Activated B cell treated with CpG ODN at 0.5 μM for 24 hours (primary cell): ENCODE measurements at regions of chr14 and their contacts with region 1.

Region 1: GRCh38 chr14:24195191-24196070 is at the start of gene TM9SF1:
- DNase-seq: peak; percentile 91
- ATAC-seq: peak; percentile 83
- H3K4me3 Mint-ChIP-seq: peak within 1 kb of the TSS; percentile 96
- H3K27ac Mint-ChIP-seq: peak within 1 kb of the TSS; percentile 97
- H3K4me1 Mint-ChIP-seq: peaks cover 48% of the 10 kb centered on the region
- H3K27me3 Mint-ChIP-seq: no peaks in the 10 kb centered on the region
- CTCF ChIP-seq: no peak
- total RNA-seq, gene TM9SF1: 24.5 and 26.3 TPM in 2 replicates

Region 2: DNA sequence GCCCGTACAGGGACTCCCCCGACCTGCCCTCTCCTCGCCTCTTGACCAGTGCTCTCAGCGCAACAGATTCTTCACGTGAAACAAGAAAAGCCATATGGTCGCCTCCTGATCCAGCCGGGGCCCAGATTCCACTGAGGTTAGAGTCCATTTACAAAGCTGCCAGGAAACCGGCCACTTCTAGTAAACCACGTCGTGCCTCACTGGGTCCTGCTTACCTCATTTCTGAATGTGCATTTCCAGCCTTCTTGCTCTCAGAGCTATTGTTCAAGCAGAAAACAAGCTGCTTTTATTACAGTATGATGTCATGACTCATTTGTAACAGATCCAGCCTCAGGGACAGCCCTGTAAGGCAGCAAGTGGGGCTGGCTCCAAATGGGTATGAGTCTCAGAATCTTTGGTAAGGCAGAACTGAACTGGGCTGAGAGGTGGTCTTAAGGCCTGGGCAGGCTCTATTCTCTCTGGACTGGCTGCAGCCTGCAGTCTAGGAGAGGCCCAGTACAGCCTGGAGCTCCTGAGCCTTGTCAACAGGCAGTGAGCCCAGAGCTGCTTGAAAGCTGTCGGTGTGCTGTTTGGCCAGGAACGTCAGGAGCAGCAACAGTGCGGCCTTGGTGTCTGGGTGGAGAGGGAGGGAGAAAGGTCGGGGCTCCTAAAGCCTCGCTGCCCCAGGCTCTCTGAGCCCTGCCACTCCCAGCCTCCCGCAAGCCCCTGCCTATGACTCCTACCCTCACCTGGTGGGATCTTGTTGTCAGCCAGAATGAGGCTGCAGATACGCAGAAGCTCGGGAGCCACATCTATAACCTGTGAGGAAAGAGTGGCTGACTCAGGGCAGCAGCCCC is 15.3 kb before region 1 on chr14:
- CTCF ChIA-PET with region 1: no interaction called
- POLR2A ChIA-PET with region 1: interaction called, 16 read pairs
- intact Hi-C with region 1: no loop called
- DNase-seq: no peak
- ATAC-seq: no peak
- H3K4me3 Mint-ChIP-seq: no peak overlapping the region
- H3K27ac Mint-ChIP-seq: peak overlapping the region; percentile 71
- H3K4me1 Mint-ChIP-seq: peaks cover 7% of the 10 kb centered on the region
- H3K27me3 Mint-ChIP-seq: no peaks in the 10 kb centered on the region
- CTCF ChIP-seq: no peak

Region 3: DNA sequence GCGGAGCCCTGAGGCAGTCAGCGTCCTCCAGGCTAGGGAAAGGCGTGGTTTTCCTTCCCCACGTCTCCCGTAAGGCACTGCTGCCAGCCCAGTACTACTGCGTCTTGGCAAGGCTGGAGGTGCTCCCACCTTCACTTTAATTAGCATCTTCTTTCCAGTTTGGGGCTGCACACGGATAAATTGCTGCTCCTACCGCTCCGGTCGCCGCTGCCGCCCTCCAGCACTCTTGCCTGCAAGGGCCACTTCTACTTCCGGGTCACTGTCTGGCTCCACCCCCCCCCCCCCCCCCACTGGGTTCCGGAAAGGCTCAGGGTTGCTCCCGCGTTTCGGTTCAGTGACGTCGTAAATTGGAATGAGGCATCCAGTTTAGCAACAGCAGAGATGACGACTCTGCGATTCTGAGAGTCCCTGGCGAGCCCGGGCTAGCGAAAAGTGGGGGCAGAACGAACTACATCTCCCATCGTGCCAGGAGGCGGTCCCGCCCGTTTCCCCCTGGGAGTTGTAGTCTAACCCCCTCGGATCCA is 36.8 kb after region 1 on chr14 and contains the start of gene NEDD8:
- CTCF ChIA-PET with region 1: no interaction called
- POLR2A ChIA-PET with region 1: interaction called, 8 read pairs
- intact Hi-C with region 1: loop called (anchors 1 kb)
- DNase-seq: no peak
- ATAC-seq: peak; percentile 88
- H3K4me3 Mint-ChIP-seq: peak within 1 kb of the TSS; percentile 99
- H3K27ac Mint-ChIP-seq: peak within 1 kb of the TSS; percentile 94
- H3K4me1 Mint-ChIP-seq: peaks cover 43% of the 10 kb centered on the region
- H3K27me3 Mint-ChIP-seq: no peaks in the 10 kb centered on the region
- CTCF ChIP-seq: no peak
- total RNA-seq, gene NEDD8: 129 and 149 TPM in 2 replicates

Region 4: DNA sequence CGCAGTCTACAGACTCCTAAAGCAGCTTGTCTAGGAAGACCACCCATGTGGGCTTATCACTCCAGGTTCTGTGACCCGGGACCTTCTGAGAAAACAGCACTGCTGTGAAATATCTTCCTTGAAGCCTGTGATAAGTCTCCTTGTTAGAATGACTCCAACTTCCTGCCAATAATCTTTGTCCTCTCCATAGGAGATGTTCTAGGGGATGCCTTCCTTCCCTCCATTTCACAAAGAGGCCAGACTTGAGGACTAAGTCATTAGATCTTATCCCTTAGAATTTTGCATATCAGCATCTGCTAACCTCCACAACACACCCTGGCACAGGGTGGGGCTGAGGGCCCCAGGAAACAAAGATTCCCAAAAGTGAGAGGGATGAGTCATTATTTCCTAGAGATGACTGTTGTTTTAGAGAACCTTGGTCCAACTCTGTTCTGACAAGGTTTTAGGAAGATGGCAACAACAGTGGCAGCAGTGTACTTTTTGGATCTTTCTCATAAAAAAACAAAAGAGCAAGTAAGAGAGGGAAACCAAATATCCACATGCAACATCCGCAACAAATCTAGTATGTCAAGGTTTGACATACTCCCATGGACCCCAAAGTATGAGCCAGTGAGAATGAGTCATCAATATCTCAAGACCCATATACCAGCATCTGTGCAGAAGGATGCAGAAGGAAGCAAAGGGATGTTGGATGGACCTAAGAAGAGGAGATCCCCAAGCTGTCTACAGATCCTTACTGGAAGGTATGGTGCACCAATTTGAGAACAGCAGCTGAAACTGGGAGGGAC is 121.9 kb after region 1 on chr14:
- CTCF ChIA-PET with region 1: no interaction called
- POLR2A ChIA-PET with region 1: no interaction called
- intact Hi-C with region 1: no loop called
- DNase-seq: no peak
- ATAC-seq: no peak
- H3K4me3 Mint-ChIP-seq: no peak overlapping the region
- H3K27ac Mint-ChIP-seq: no peak overlapping the region
- H3K4me1 Mint-ChIP-seq: peaks cover 25% of the 10 kb centered on the region
- H3K27me3 Mint-ChIP-seq: peaks cover 6% of the 10 kb centered on the region
- CTCF ChIP-seq: no peak

Region 5: DNA sequence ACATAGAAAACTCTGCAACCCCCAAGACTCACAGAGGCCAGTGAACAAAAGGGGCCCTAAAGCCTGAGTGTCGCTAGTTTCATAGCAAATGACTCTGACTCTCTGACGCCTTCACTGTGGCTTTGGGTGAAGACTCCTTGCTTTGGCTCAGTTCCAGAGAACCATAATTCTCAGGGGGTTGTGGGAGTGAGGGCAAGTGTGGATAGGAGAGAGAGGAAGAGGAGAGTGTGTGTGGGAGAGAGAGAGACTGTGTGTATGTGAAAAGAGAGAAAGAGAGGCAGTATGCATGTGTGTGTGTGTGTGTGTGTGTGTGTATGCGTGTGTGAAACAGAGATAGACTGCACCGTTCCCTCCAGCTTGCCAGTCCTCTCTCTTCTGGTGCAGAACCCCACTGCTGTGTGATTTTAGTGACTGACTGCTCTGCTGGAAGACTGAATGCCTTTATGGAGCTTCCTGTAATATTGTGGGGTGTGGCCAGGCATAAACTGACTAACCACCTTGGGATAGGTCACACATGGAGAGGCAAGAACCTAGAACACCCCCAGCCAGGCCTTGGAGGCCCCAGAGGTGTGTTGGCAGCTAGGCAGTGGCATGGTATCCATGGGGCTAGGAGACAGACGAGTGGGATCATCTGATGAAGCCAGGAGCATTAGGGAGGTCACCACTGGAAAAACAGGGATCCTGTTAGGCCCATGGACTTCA is 900.5 kb after region 1 on chr14:
- CTCF ChIA-PET with region 1: no interaction called
- POLR2A ChIA-PET with region 1: no interaction called
- intact Hi-C with region 1: no loop called
- DNase-seq: no peak
- ATAC-seq: no peak
- H3K4me3 Mint-ChIP-seq: no peak overlapping the region
- H3K27ac Mint-ChIP-seq: no peak overlapping the region
- H3K4me1 Mint-ChIP-seq: no peaks in the 10 kb centered on the region
- H3K27me3 Mint-ChIP-seq: peaks cover 13% of the 10 kb centered on the region
- CTCF ChIP-seq: no peak